Caco-2 (cell line): ENCODE measurements at regions of chr2 and their contacts with region 1.

Region 1: DNA sequence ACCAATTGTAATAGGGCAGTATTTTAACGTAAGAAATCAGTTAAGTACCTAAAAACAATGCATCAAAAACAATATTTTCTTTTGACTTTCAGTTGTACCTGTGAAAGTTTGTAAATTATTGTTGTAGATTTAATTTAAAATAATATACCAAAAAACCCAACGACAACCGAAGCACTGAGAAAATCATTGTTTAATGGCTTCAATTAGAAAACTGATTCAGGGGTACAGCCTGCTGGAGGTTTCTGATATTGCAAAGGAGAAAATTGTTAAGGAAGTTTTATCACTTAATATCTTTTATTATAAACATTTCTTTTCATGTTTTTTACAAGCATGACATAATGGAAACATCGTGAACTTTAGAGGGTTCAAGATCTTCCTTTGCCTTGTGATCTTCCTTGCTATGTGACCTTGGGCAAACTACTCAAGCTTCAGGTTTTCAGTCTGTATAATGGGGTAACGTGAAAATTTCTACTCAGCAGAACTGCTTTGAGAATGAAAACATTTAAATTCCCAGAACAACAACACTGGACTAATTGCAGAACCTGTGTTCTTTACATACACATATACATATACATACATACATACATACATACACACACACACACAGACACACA is 76.3 kb upstream of the GLS start:
- DNase-seq: no peak
- H3K4me3 ChIP-seq: no peak overlapping the region
- H3K4me3 Mint-ChIP-seq: no peak overlapping the region
- H3K27ac Mint-ChIP-seq: peak overlapping the region; percentile 39
- H3K4me1 ChIP-seq: peaks cover 60% of the 10 kb centered on the region
- H3K4me1 Mint-ChIP-seq: peaks cover 57% of the 10 kb centered on the region
- H3K27me3 ChIP-seq: no peaks in the 10 kb centered on the region
- H3K27me3 Mint-ChIP-seq: no peaks in the 10 kb centered on the region
- CTCF ChIP-seq: peak; percentile 49 to 70

Region 2: DNA sequence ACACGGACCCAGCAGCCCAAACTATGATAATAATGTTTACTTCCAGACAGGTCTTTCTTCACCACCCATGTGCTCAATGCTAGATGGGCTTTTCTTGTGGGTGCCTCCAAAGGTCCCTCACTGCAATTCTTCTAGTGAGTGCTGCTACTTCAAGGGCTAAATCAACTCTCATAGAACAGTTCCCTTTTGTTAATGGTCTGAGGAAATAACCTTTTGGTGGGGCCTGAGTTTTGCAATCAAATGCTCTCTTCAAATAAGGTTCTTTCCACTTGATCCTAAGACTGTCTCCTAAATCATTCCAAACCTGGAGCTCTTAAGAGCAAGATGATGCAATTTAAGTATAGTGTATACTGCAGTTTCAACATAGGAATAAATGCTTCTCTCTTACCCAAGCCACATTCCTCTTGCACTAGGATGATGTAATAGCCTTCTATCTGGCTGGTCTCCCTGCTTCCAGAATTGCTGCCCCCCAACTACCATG is 275.7 kb before region 1 on chr2:
- CTCF ChIA-PET with region 1: no interaction called
- POLR2A ChIA-PET with region 1: no interaction called
- intact Hi-C with region 1: loop called (anchors 2 kb)
- DNase-seq: peak; percentile 78
- H3K4me3 ChIP-seq: no peak overlapping the region
- H3K4me3 Mint-ChIP-seq: peak overlapping the region; percentile 59
- H3K27ac Mint-ChIP-seq: peak overlapping the region; percentile 93
- H3K4me1 ChIP-seq: peaks cover 75% of the 10 kb centered on the region
- H3K4me1 Mint-ChIP-seq: peaks cover 47% of the 10 kb centered on the region
- H3K27me3 ChIP-seq: no peaks in the 10 kb centered on the region
- H3K27me3 Mint-ChIP-seq: no peaks in the 10 kb centered on the region
- CTCF ChIP-seq: no peak

Region 3: DNA sequence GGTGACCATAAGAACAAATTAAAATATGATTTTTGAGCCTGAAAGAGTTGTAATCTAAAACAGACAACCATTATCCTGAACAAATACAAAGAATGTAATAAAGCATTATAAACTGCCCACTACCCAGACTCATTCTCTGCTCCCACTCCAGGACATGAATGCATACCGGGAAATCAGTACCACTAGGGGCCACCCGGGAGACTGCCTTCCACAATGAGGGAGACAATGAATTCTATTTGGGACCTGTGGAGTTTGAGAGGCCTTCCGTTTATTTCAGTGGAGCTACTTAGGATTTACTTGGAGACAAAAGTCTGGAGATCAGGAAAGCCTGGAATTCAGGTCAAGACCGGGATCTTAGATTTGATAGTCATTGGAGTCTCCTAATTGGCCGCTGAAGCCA is 105.4 kb before region 1 on chr2:
- CTCF ChIA-PET with region 1: no interaction called
- POLR2A ChIA-PET with region 1: no interaction called
- intact Hi-C with region 1: no loop called
- DNase-seq: peak in 1 of 2 experiments; percentile 17
- H3K4me3 ChIP-seq: no peak overlapping the region
- H3K4me3 Mint-ChIP-seq: no peak overlapping the region
- H3K27ac Mint-ChIP-seq: no peak overlapping the region
- H3K4me1 ChIP-seq: peaks cover 30% of the 10 kb centered on the region
- H3K4me1 Mint-ChIP-seq: peaks cover 20% of the 10 kb centered on the region
- H3K27me3 ChIP-seq: no peaks in the 10 kb centered on the region
- H3K27me3 Mint-ChIP-seq: no peaks in the 10 kb centered on the region
- CTCF ChIP-seq: peak in 1 of 2 experiments; percentile 31

Region 4: GRCh38 chr2:190763901-190764514 is 40.3 kb before region 1 on chr2:
- CTCF ChIA-PET with region 1: no interaction called
- POLR2A ChIA-PET with region 1: no interaction called
- intact Hi-C with region 1: no loop called
- DNase-seq: no peak
- H3K4me3 ChIP-seq: no peak overlapping the region
- H3K4me3 Mint-ChIP-seq: no peak overlapping the region
- H3K27ac Mint-ChIP-seq: no peak overlapping the region
- H3K4me1 ChIP-seq: no peaks in the 10 kb centered on the region
- H3K4me1 Mint-ChIP-seq: peaks cover 9% of the 10 kb centered on the region
- H3K27me3 ChIP-seq: no peaks in the 10 kb centered on the region
- H3K27me3 Mint-ChIP-seq: no peaks in the 10 kb centered on the region
- CTCF ChIP-seq: no peak

Region 5: DNA sequence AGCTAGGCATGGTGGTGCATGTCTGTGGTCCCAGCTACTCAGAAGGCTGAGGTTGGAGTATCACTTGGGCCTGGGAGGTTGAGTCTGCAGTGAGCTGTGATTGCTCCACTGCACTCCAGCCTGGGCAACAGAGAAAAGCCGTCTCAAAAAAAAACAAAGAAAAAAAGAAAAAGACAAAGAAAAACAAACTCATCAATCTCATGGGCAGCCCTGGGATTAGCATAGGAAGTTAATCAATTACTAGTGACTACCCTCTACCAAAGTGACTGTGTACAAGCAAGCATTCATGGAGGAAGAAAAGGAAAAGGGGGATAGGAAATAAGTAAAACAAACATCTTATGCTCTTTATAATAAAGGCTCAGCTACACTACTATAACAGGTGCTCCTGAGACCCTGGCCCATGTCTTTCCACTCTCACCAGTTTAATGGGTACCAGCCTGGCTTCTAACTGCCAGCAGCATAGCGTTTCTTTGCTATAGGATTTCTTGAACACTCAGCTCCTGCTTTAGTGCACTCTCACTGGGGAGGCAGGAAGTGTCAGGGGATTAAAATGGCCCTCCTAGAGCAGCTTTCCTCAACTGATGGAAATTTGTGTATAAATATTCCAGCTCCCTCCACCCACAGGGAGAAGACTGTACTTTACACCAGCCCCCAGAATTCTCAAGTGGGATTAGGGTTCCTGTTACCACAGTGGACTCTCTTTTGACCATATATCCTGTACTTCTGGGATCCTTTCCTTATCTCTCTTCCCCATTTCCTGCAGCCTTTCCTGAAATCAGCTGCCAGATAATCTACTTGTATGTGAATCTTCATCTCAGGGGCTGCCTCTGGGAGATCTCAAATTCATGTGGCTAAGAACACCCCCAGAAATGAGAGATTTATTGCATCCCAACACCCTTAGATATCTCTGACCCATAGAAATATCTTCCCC is 14.9 kb before region 1 on chr2:
- CTCF ChIA-PET with region 1: interaction called, 4 read pairs
- POLR2A ChIA-PET with region 1: no interaction called
- intact Hi-C with region 1: loop called (anchors 1 kb)
- DNase-seq: peak in 1 of 2 experiments; percentile 31
- H3K4me3 ChIP-seq: no peak overlapping the region
- H3K4me3 Mint-ChIP-seq: no peak overlapping the region
- H3K27ac Mint-ChIP-seq: peak overlapping the region; percentile 67
- H3K4me1 ChIP-seq: peaks cover 46% of the 10 kb centered on the region
- H3K4me1 Mint-ChIP-seq: peaks cover 47% of the 10 kb centered on the region
- H3K27me3 ChIP-seq: no peaks in the 10 kb centered on the region
- H3K27me3 Mint-ChIP-seq: no peaks in the 10 kb centered on the region
- CTCF ChIP-seq: no peak

Region 6: GRCh38 chr2:190853531-190854383 is 49.5 kb after region 1 on chr2:
- CTCF ChIA-PET with region 1: no interaction called
- POLR2A ChIA-PET with region 1: no interaction called
- intact Hi-C with region 1: loop called (anchors 1 kb)
- DNase-seq: no peak
- H3K4me3 ChIP-seq: no peak overlapping the region
- H3K4me3 Mint-ChIP-seq: no peak overlapping the region
- H3K27ac Mint-ChIP-seq: no peak overlapping the region
- H3K4me1 ChIP-seq: peaks cover 37% of the 10 kb centered on the region
- H3K4me1 Mint-ChIP-seq: peaks cover 34% of the 10 kb centered on the region
- H3K27me3 ChIP-seq: no peaks in the 10 kb centered on the region
- H3K27me3 Mint-ChIP-seq: no peaks in the 10 kb centered on the region
- CTCF ChIP-seq: no peak

Region 7: GRCh38 chr2:190880378-190881073 is 76.2 kb after region 1 on chr2 and contains the start of gene GLS:
- CTCF ChIA-PET with region 1: no interaction called
- POLR2A ChIA-PET with region 1: interaction called, 6 read pairs
- intact Hi-C with region 1: loop called (anchors 1 kb)
- DNase-seq: peak; percentile 97
- H3K4me3 ChIP-seq: peak within 1 kb of the TSS; percentile 98
- H3K4me3 Mint-ChIP-seq: peak within 1 kb of the TSS; percentile 97
- H3K27ac Mint-ChIP-seq: peak within 1 kb of the TSS; percentile 94
- H3K4me1 ChIP-seq: peaks cover 12% of the 10 kb centered on the region
- H3K4me1 Mint-ChIP-seq: peaks cover 19% of the 10 kb centered on the region
- H3K27me3 ChIP-seq: no peaks in the 10 kb centered on the region
- H3K27me3 Mint-ChIP-seq: no peaks in the 10 kb centered on the region
- CTCF ChIP-seq: no peak
- total RNA-seq, gene GLS: 107 and 136 TPM in 2 replicates

Region 8: DNA sequence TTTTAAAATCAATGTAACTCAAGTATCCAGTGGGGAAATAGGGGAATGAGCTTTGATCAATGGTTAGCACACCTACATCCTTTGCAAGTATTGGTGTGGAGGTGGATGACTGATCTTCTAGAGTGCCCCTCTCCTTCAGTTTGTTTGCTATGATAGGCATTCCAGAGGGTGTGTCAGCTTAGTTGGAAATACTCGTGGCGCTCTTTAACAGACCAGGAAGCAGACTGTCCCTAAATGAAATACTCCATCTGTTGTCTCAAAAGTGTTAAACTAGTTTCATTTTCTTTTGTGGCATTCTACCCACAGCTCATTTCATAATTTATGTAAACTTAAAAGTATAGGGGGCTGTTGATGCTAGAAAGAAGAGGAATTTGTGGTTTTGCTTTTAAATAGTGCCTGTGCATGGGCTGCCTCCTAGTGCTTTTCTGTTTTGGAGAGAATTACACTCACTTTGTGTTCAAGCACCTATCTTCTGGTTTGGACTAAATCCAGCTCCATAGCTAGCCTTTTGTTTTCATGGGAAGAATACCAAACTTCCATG is 143.5 kb after region 1 on chr2:
- CTCF ChIA-PET with region 1: no interaction called
- POLR2A ChIA-PET with region 1: no interaction called
- intact Hi-C with region 1: loop called (anchors 1 kb)
- DNase-seq: peak; percentile 60 to 67
- H3K4me3 ChIP-seq: no peak overlapping the region
- H3K4me3 Mint-ChIP-seq: peak overlapping the region; percentile 15
- H3K27ac Mint-ChIP-seq: no peak overlapping the region
- H3K4me1 ChIP-seq: peaks cover 33% of the 10 kb centered on the region
- H3K4me1 Mint-ChIP-seq: peaks cover 7% of the 10 kb centered on the region
- H3K27me3 ChIP-seq: no peaks in the 10 kb centered on the region
- H3K27me3 Mint-ChIP-seq: no peaks in the 10 kb centered on the region
- CTCF ChIP-seq: no peak